ENCODE measurements at regions of chr7 and their contacts with region 1.

Region 1: GRCh38 chr7:28179120-28180030 is 1.2 kb downstream of the JAZF1 start:
- DNase-seq: peak; percentile 55 to 59
- ATAC-seq: peak; percentile 77 to 84
- H3K4me3 ChIP-seq: peak overlapping the region; percentile 53 to 97 (median 68)
- H3K27ac ChIP-seq: peak overlapping the region; percentile 66 to 87 (median 84)
- H3K4me1 ChIP-seq: peaks cover 18 to 21% of the 10 kb centered on the region in 2 donors
- H3K27me3 ChIP-seq: no peaks in the 10 kb centered on the region
- CTCF ChIP-seq: no peak
- POLR2A ChIP-seq: peak; percentile 27 to 41

Region 2: GRCh38 chr7:27662490-27663205 is 516.7 kb before region 1 on chr7 and contains the start of gene HIBADH:
- in situ Hi-C with region 1: no loop called
- intact Hi-C with region 1: loop called (anchors 10 kb)
- DNase-seq: peak; percentile 99 to 100
- ATAC-seq: peak; percentile 96 to 98
- H3K4me3 ChIP-seq: peak within 1 kb of the TSS; percentile 73 to 99 (median 92)
- H3K27ac ChIP-seq: peak within 1 kb of the TSS; percentile 95 to 100 (median 97)
- H3K4me1 ChIP-seq: peaks cover 10 to 14% of the 10 kb centered on the region in 2 donors
- H3K27me3 ChIP-seq: no peaks in the 10 kb centered on the region
- CTCF ChIP-seq: peak; percentile 12 to 46 (median 29)
- POLR2A ChIP-seq: peak; percentile 96 to 99
- total RNA-seq, gene HIBADH: 42.2 to 56.4 (median 49.0) TPM

Region 3: DNA sequence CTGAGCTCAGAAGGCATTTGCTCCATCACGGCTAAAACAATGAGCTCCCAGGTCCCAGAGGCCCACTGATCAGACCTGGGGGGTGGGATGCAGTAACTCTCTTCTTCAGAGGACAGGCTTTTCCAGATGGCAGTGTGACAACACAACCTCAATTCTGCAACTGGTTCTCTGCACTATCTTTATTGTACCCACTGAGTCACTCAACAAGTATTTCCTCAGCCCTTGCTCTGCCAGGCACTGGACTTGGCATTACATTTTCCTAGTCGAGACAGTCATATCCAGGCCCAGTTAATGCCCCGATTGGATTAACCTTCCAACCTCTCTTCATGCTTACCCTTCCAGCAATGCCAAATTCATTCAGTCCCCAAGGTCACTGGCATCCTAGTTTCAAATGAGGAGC is 71.4 kb before region 1 on chr7:
- in situ Hi-C with region 1: no loop called
- intact Hi-C with region 1: loop called (anchors 2 kb)
- DNase-seq: peak in 1 of 2 donors; percentile 49
- ATAC-seq: peak; percentile 49 to 63
- H3K4me3 ChIP-seq: no peak overlapping the region
- H3K27ac ChIP-seq: peak overlapping the region; percentile 74 to 92 (median 87)
- H3K4me1 ChIP-seq: peaks cover 50 to 51% of the 10 kb centered on the region in 2 donors
- H3K27me3 ChIP-seq: no peaks in the 10 kb centered on the region
- CTCF ChIP-seq: no peak
- POLR2A ChIP-seq: no peak

Region 4: DNA sequence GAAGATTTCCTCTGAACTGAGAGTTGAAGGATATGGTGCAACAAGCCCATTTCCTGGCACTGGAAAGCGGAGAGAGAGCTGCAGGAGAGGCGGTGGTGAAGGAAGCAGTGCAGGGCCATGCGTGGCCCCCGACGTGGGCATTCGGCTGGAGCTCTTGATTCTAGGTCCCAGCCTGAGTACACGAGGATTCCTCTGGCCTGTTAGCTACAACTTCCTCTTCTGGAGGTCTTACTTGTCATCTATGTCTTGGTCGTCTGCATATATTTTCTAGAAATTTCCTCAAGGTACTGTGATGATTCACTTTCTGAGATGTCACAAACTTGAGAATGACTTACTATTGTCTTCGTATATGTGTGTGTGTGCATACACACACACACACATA is 60.4 kb after region 1 on chr7:
- in situ Hi-C with region 1: no loop called
- intact Hi-C with region 1: no loop called
- DNase-seq: no peak
- ATAC-seq: no peak
- H3K4me3 ChIP-seq: no peak overlapping the region
- H3K27ac ChIP-seq: no peak overlapping the region
- H3K4me1 ChIP-seq: no peaks in the 10 kb centered on the region
- H3K27me3 ChIP-seq: no peaks in the 10 kb centered on the region
- CTCF ChIP-seq: no peak
- POLR2A ChIP-seq: no peak

Measured in gastrocnemius medialis (tissue), 4 donors.